GM12878 (cell line): ENCODE measurements at regions of chr1 and their contacts with region 1.

Region 1: GRCh38 chr1:154943649-154944400 is 7.3 kb upstream of the PMVK start:
- DNase-seq: no peak
- ATAC-seq: peak; percentile 37
- H3K4me3 ChIP-seq: peak overlapping the region; percentile 77
- H3K27ac ChIP-seq: peak overlapping the region; percentile 100
- H3K4me1 ChIP-seq: peaks cover 63% of the 10 kb centered on the region
- H3K27me3 ChIP-seq: no peaks in the 10 kb centered on the region
- CTCF ChIP-seq: peak; percentile 88 to 90 (median 89)
- EP300 ChIP-seq: no peak
- POLR2A ChIP-seq: no peak
- RAD21 ChIP-seq: peak; percentile 71

Region 2: DNA sequence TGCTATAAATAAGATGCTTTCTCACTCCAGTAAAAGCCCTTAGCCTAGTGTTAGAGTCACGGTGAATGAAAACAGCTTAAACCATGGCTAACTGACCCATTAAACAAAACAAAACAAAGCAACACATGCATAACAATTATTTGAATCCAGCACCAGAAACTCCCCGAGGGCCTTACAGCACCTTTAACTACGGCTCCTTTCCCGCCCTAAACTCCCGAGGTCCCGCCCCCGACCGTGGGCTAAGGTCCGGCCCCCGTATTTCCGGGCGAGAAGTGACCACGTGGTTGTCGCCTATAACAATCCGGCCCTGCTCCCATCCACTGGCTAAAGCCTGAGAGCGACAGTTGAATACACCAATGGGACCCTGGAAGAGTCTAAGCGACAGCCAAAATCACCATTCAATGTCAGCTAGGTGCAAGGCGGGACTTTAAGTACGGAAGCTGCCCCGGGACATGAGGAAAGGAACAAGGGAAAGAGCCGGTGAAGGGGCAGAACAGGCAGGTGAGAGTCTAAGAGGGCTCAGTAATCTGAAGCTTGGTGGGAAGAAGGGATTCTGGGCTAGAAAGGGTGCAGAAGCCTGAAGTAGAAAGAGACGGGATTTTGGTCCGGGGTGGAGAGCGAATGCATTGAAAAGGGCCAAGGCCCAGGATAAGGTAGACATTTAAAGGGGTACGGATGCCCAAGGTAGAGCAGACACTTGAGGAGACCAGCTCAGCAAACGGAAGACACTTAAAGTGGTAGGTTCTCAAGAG is 39.2 kb after region 1 on chr1 and contains the start of gene FLAD1:
- CTCF ChIA-PET with region 1: no interaction called
- POLR2A ChIA-PET with region 1: interaction called, 15 read pairs
- RAD21 ChIA-PET with region 1: interaction called, 3 read pairs
- SMC1A ChIA-PET with region 1: no interaction called
- in situ Hi-C with region 1: no loop called
- intact Hi-C with region 1: no loop called
- DNase-seq: peak; percentile 100
- ATAC-seq: peak; percentile 100
- H3K4me3 ChIP-seq: peak within 1 kb of the TSS; percentile 96
- H3K27ac ChIP-seq: peak within 1 kb of the TSS; percentile 79
- H3K4me1 ChIP-seq: peaks cover 6% of the 10 kb centered on the region
- H3K27me3 ChIP-seq: no peaks in the 10 kb centered on the region
- CTCF ChIP-seq: no peak
- EP300 ChIP-seq: no peak
- POLR2A ChIP-seq: peak; percentile 66
- RAD21 ChIP-seq: no peak
- polyA plus RNA-seq, gene FLAD1: 22.9 to 30.1 TPM